ENCODE measurements at regions of chr5 and their contacts with region 1.

Region 1: DNA sequence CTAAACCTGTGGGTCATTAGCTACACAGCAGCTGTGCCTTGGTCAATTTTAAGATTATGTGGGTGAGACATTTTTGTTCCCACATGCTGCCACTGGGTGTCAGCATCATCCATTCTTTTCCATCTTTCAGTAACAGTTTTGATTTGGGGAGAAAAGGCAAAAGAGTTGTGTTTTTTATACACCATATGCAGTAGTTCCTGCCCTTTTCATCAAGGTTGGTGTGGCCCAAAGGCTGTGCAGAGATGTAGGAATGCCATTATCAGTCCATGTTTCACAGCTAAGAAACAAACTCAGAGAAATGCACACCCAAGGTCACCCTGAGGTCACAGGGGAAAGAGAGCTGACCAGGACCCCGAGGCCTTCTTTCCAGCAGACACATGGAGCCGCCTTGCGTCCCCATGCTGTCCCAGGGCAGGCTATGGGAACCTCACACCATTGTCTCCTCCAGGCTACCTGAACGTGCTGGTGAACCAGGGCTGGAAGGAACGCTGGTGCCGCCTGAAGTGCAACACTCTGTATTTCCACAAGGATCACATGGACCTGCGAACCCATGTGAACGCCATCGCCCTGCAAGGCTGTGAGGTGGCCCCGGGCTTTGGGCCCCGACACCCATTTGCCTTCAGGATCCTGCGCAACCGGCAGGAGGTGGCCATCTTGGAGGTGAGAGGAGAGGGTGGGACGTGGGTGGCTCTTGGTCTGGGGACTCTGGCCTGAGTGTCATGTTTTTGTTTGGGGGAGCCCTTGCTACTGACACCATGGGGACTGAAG is 27.8 kb upstream of the GRPEL2 start:
- DNase-seq: peak; percentile 62
- H3K4me3 ChIP-seq: no peak overlapping the region
- H3K27ac ChIP-seq: no peak overlapping the region
- H3K4me1 ChIP-seq: peaks cover 22% of the 10 kb centered on the region
- H3K27me3 ChIP-seq: no peaks in the 10 kb centered on the region
- CTCF ChIP-seq: peak; percentile 51 to 64
- POLR2A ChIP-seq: no peak

Region 2: GRCh38 chr5:148949841-148950470 is 367.5 kb before region 1 on chr5:
- CTCF ChIA-PET with region 1: no interaction called
- POLR2A ChIA-PET with region 1: no interaction called
- dilution Hi-C with region 1: no loop called
- intact Hi-C with region 1: no loop called
- DNase-seq: no peak
- H3K4me3 ChIP-seq: no peak overlapping the region
- H3K27ac ChIP-seq: no peak overlapping the region
- H3K4me1 ChIP-seq: no peaks in the 10 kb centered on the region
- H3K27me3 ChIP-seq: no peaks in the 10 kb centered on the region
- CTCF ChIP-seq: no peak
- POLR2A ChIP-seq: no peak

Region 3: DNA sequence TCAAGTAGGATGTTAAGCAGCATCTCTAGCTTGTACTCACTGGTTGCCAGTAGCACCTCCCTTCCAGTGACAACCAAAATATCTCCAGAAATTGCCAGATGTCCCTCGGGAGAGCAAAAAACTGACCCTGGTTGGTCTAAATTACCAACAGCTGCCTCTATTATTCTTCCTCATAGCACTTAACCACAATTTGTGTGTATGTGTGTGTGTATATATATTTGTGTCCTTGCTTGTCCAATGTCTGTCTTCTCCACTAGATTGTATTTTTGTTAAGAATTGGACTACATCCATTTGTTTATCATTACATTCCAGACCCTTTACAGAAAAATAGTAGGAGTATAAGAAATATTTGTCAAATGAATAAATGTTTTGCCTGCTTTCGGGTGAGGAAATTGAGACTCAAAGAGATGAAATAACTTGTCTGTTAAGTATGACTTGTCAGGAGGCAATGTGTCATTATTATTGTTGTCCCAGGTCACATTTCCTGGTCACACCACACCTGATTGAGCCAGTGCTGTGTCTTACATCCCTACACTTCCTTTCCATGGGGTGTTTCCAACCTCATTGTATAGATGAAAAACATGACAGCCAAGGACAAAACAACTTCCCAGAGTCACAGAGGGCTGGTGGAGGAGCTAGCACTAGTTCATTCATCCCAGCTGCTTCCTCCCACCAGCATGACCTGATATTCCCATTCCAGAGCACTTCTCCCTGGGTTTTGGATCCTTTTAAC is 16.4 kb after region 1 on chr5:
- CTCF ChIA-PET with region 1: interaction called, 6 read pairs
- POLR2A ChIA-PET with region 1: interaction called, 3 read pairs
- dilution Hi-C with region 1: no loop called
- intact Hi-C with region 1: loop called (anchors 2 kb)
- DNase-seq: peak; percentile 79
- H3K4me3 ChIP-seq: no peak overlapping the region
- H3K27ac ChIP-seq: peak overlapping the region; percentile 68
- H3K4me1 ChIP-seq: peaks cover 20% of the 10 kb centered on the region
- H3K27me3 ChIP-seq: no peaks in the 10 kb centered on the region
- CTCF ChIP-seq: no peak
- POLR2A ChIP-seq: no peak

Region 4: GRCh38 chr5:149357370-149358293 is 40.2 kb after region 1 on chr5 and contains the start of gene PCYOX1L:
- CTCF ChIA-PET with region 1: interaction called, 10 read pairs
- POLR2A ChIA-PET with region 1: interaction called, 4 read pairs
- dilution Hi-C with region 1: no loop called
- intact Hi-C with region 1: loop called (anchors 5 kb)
- DNase-seq: peak; percentile 95
- H3K4me3 ChIP-seq: peak within 1 kb of the TSS; percentile 25 to 61 (median 48)
- H3K27ac ChIP-seq: no peak within 1 kb of the TSS
- H3K4me1 ChIP-seq: peaks cover 3% of the 10 kb centered on the region
- H3K27me3 ChIP-seq: no peaks in the 10 kb centered on the region
- CTCF ChIP-seq: no peak
- POLR2A ChIP-seq: peak; percentile 69
- total RNA-seq, gene PCYOX1L: 17.0 and 23.3 TPM in 2 replicates

Region 5: DNA sequence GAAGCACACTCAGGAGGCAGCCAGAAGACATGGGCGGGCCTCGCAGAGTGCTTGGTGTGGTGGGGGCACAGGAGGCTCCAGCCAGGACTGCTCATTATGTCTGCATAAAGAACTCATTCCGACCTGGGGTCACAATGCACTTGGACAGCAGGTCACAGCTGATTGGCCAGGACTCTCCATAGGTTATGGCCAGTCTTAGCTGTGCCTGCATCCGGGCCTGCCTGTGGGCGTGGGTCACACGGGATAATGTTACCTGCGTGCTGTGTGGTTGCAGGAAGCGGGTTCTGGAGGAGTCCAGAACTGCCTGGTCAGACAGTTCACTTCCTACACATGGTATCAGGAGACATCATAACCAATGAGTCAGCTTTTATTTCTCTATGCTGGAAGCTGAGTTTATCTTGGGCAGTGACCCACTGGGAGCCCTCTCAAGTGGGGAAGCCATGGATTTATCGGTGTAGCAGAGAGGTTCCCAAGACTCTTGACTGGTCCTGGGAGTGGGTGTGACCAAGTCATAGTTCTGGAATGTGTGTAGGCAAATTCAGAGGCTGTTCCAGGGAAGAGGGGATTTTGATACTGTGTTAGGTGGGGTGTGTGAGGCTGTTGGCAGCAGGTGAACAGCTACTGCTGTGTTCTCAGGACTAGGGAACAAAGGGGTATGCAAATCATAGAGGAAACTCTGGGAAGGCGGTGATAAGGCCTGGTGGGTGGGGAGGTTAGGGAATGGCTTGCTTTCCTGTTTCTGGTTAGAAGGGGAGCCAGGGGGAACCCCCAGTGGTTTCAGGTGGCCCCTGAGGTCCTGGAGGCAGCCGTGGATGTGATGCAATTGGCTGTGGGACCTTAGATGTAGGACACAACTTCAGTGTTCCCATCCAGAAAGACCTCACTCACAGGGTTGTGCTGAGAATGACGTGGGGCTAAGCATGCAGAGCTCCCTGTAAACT is 315.1 kb after region 1 on chr5:
- CTCF ChIA-PET with region 1: no interaction called
- POLR2A ChIA-PET with region 1: no interaction called
- dilution Hi-C with region 1: no loop called
- intact Hi-C with region 1: no loop called
- DNase-seq: peak; percentile 76
- H3K4me3 ChIP-seq: no peak overlapping the region
- H3K27ac ChIP-seq: no peak overlapping the region
- H3K4me1 ChIP-seq: peaks cover 19% of the 10 kb centered on the region
- H3K27me3 ChIP-seq: no peaks in the 10 kb centered on the region
- CTCF ChIP-seq: no peak
- POLR2A ChIP-seq: no peak

Measured in endothelial cell of umbilical vein (primary cell).